ENCODE measurements at regions of chr14 and their contacts with region 1.

Region 1: DNA sequence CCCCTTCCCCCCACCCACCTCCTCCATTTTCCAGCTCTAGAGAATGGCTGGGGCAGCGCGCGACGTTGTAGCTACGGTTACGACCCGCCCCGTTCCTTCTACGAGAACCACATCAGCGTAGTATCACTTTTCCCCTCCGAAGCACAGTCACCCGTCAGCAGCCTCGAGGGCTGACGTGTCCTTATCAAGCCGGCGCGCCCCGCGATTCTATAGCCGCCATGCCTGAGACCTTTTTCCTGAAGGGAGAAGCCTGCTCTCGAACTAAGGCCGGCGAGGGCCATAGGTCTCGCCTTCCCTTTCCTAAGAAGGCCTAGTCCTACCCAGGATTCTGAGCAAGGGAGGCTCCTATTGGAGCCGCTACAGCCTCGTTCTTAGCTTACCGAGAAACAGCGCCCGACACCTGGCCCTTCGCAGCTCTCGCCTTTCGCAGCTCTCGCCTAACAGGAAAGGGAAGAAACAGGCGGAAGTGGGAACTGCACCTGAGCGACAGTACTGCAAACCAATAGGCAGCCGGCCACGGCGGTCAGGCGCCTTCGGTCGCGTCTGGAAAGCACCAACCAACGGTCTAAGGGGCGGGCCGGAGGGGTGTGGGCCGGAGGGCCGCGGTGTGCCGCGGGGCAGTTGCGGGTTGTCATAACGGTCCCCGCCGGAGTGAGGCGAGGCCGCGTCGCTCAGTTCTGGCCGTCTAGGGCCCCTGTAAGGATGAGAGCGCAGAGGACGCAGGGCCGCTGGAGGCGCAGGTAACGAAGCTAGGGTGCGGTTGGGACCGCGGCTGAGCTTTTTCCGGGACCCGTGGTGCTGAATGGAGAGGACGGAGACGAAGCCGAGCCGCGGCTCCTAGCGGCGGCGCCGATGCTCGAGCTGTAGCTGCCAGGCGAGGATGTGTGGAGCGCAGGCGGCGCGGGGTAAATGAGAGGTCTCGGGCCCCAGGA is at the starts of genes MGAT2 and RPL36AL:
- DNase-seq: peak; percentile 97
- ATAC-seq: peak; percentile 91
- H3K4me3 Mint-ChIP-seq: peak within 1 kb of the TSS; percentile 93
- H3K27ac Mint-ChIP-seq: peak within 1 kb of the TSS; percentile 96
- H3K4me1 Mint-ChIP-seq: peaks cover 58% of the 10 kb centered on the region
- H3K27me3 Mint-ChIP-seq: no peaks in the 10 kb centered on the region
- total RNA-seq, gene MGAT2: 55.1 to 57.4 TPM
- total RNA-seq, gene RPL36AL: 229 to 241 TPM

Region 2: DNA sequence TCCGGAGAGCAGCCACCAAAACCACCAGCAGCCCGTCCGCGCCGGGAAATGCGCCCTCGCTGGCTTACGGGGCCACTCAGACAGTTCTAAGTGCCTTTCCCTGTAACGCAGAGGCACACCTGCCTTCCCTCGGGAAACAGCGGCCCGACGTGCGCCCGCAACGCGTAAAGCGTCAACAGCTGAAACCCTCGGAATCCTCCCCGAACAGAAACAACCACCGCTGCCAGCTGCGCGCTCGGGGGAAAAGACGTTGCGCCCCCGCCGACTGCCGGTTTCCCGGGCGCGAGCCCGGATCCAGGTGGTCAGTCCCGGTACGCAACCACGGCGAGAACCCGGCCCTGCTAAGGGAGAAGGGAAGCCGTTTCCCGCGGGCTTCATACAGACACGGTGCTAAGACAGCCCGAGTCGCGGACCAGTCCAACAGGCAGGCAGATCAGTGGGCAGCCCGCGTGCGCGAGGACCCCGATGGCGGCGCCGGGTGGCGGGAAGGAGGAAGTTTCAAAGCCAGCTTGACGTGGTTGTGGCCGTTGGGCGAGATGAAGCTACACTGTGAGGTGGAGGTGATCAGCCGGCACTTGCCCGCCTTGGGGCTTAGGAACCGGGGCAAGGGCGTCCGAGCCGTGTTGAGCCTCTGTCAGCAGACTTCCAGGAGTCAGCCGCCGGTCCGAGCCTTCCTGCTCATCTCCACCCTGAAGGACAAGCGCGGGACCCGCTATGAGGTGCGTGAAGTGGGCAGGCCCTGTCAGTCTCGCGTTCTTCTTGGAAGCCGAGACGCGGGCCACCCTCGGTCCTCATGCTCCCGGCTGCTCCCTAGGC is 21.8 kb before region 1 on chr14 and contains the start of gene LRR1:
- CTCF ChIA-PET with region 1: interaction called, 13 read pairs
- POLR2A ChIA-PET with region 1: interaction called, 72 read pairs
- DNase-seq: peak; percentile 90
- ATAC-seq: peak; percentile 86
- H3K4me3 Mint-ChIP-seq: peak within 1 kb of the TSS; percentile 99
- H3K27ac Mint-ChIP-seq: peak within 1 kb of the TSS; percentile 99
- H3K4me1 Mint-ChIP-seq: peaks cover 37% of the 10 kb centered on the region
- H3K27me3 Mint-ChIP-seq: no peaks in the 10 kb centered on the region
- total RNA-seq, gene LRR1: 63.1 to 65.0 TPM

Region 3: DNA sequence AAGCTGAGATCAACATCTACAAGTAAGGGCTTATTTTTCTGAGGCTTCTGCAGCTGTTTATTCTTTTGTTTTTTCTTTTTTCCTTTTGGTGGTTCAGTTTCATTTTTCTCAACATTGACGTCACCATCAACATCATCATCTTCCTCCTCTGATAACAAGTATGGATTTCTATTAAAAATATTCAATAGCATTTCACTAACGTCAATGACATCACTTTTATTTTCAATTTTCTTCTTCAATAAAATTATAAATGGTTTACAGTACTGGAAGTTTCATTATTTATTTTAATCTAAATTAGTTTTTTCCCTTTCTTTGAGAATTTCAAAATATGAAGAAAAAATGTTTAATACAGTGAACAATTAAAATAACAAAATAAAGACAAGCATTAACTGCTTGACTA is 208.2 kb after region 1 on chr14:
- CTCF ChIA-PET with region 1: no interaction called
- POLR2A ChIA-PET with region 1: no interaction called
- DNase-seq: no peak
- ATAC-seq: no peak
- H3K4me3 Mint-ChIP-seq: no peak overlapping the region
- H3K27ac Mint-ChIP-seq: no peak overlapping the region
- H3K4me1 Mint-ChIP-seq: peaks cover 4% of the 10 kb centered on the region
- H3K27me3 Mint-ChIP-seq: no peaks in the 10 kb centered on the region